Aorta (tissue), 5 donors: ENCODE measurements at regions of chr17 and their contacts with region 1.

Region 1: GRCh38 chr17:6941989-6942388 is 53.9 kb upstream of the ALOX12 start:
- DNase-seq: no peak
- ATAC-seq: no peak
- H3K4me3 ChIP-seq: no peak overlapping the region
- H3K27ac ChIP-seq: no peak overlapping the region
- H3K4me1 ChIP-seq: no peaks in the 10 kb centered on the region
- H3K27me3 ChIP-seq: no peaks in the 10 kb centered on the region

Region 2: GRCh38 chr17:6959700-6960099 is 17.7 kb after region 1 on chr17:
- intact Hi-C with region 1: loop called in 1 of 2 experiments (anchors 2 kb)
- DNase-seq: no peak
- ATAC-seq: no peak
- H3K4me3 ChIP-seq: no peak overlapping the region
- H3K27ac ChIP-seq: no peak overlapping the region
- H3K4me1 ChIP-seq: no peaks in the 10 kb centered on the region
- H3K27me3 ChIP-seq: no peaks in the 10 kb centered on the region

Region 3: GRCh38 chr17:6995431-6996255 is 53.7 kb after region 1 on chr17 and contains the start of gene ALOX12:
- intact Hi-C with region 1: no loop called
- DNase-seq: peak; percentile 56 to 77
- ATAC-seq: peak; percentile 50
- H3K4me3 ChIP-seq: no peak within 1 kb of the TSS
- H3K27ac ChIP-seq: no peak within 1 kb of the TSS
- H3K4me1 ChIP-seq: no peaks in the 10 kb centered on the region
- H3K27me3 ChIP-seq: no peaks in the 10 kb centered on the region
- total RNA-seq, gene ALOX12: not detected